Right cardiac atrium (tissue), 5 donors: ENCODE measurements at regions of chr22 and their contacts with region 1.

Region 1: DNA sequence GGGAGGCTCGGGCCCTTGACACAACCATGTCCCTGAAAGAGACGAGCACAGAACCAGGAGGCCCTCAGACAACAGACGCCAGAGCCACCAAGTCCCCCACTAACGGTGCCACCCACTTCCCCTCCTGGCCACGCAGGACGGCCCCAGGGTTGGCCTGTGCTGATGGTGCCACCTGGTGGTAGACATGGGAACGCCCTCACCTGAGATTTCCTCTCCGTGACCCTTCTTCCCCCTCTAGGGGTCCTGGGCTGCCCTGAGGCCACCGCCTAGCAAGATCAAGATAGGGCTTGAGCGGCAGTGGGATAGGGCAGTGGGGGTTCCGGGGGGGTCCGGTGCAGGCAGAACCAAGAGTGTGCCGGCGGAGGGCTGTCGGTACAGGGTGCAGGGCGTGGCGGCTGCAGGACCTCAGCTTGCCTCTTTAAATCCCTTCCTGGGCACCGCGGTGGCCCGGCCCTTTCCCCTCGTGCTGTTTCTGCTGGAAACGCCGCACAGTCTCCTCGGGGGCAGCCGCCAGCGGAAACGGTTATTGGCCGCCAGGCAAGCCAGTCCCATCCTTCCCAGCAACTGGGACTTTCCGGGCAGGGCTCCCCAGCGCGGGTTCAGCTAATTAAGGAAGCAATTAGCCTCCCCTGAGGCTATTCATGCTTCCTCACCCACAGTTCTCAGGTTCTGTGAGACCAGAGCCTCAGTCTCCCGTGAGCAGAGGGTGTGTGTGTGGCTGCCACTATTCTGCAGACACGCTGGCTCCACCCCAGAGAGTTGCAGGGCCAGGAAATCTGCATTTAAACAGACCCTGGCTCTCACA is 5.5 kb upstream of the NFAM1 start:
- DNase-seq: peak; percentile 70 to 90 (median 89)
- ATAC-seq: peak; percentile 80 to 84
- H3K4me3 ChIP-seq: peak overlapping the region; percentile 18
- H3K27ac ChIP-seq: no peak overlapping the region
- H3K4me1 ChIP-seq: no peaks in the 10 kb centered on the region
- H3K27me3 ChIP-seq: no peaks in the 10 kb centered on the region

Region 2: DNA sequence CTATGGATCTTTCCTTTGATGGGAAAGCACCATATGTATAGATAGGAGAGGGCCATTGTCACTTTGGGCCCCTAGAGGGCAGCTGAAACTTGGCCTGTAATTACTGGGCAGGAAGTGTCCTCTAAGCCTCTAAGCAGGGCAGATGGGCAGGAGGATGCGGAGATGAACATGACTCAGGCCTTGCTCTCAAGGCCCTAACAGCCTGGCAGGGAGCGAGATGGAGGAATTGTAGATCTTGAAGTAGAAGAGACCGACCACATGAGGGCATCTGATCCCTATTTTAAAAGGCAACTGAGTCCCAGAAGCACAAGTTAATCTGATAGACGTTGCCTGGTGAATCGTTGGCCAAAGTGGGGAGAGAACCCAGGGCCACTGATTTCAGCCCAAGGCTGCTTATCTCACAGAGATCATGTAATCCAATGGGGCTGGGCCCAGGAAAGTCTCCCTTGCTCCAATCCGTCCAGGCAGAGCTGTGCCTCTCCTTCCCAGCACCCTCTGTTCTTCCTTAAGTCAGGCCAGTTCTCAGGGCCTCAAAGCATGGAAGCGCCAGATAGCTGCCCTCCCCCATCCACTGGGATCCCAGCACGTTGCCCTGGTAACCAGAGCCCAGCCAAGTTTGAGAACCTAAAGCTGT is 471.0 kb before region 1 on chr22:
- intact Hi-C with region 1: loop called in 1 of 4 experiments (anchors 5 kb)
- DNase-seq: no peak
- ATAC-seq: peak; percentile 44 to 52
- H3K4me3 ChIP-seq: no peak overlapping the region
- H3K27ac ChIP-seq: no peak overlapping the region
- H3K4me1 ChIP-seq: no peaks in the 10 kb centered on the region
- H3K27me3 ChIP-seq: no peaks in the 10 kb centered on the region

Region 3: GRCh38 chr22:42090596-42091454 is 346.9 kb before region 1 on chr22 and contains the start of gene NDUFA6:
- intact Hi-C with region 1: loop called in 3 of 4 experiments (anchors 5 to 10 kb)
- DNase-seq: peak; percentile 99
- ATAC-seq: peak; percentile 98
- H3K4me3 ChIP-seq: peak within 1 kb of the TSS; percentile 65
- H3K27ac ChIP-seq: peak within 1 kb of the TSS; percentile 96
- H3K4me1 ChIP-seq: peaks cover 10% of the 10 kb centered on the region
- H3K27me3 ChIP-seq: no peaks in the 10 kb centered on the region
- total RNA-seq, gene NDUFA6: 212 to 255 (median 231) TPM

Region 4: DNA sequence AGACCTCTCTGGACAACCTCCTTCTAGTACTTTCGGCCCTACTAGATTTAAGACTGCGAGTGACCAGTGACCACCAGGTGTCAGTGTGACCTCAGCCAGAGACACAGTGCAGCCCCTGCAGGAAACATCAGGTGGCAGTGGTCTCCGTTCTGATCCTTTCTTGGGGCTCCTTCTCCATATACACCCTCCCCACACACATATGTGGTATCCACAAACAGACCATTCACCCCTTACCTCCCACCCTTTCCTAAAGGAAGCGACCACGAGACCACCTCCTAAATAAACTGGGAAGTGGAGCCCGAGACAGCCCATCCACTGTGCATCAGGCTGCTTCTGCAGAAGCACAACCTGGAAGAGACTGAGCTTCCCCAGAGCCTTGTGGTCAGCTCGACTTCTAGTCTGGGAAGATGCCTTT is 268.6 kb before region 1 on chr22:
- intact Hi-C with region 1: loop called (anchors 2 to 5 kb)
- DNase-seq: peak; percentile 64 to 86 (median 80)
- ATAC-seq: peak; percentile 56 to 74
- H3K4me3 ChIP-seq: no peak overlapping the region
- H3K27ac ChIP-seq: no peak overlapping the region
- H3K4me1 ChIP-seq: no peaks in the 10 kb centered on the region
- H3K27me3 ChIP-seq: no peaks in the 10 kb centered on the region